ENCODE measurements at regions of chr15 and their contacts with region 1.

Region 1: DNA sequence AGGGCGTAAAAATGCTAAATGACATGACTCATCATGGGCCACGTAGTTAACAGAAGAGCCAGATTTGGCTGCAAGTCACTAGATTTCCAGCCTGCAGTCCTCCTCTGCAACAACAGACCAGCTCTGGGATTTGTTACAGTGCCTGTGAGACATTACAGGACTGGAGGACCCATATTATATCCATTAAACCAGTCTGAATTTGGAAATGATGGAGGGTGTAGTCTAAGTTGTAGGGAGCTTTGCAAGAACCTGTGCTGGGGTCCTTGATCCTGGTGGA is 10.8 kb downstream of the ZNF774 start:
- DNase-seq: no peak
- H3K4me3 Mint-ChIP-seq: no peak overlapping the region
- H3K27ac Mint-ChIP-seq: peak overlapping the region; percentile 54
- H3K4me1 Mint-ChIP-seq: peaks cover 38% of the 10 kb centered on the region
- H3K27me3 Mint-ChIP-seq: no peaks in the 10 kb centered on the region

Region 2: DNA sequence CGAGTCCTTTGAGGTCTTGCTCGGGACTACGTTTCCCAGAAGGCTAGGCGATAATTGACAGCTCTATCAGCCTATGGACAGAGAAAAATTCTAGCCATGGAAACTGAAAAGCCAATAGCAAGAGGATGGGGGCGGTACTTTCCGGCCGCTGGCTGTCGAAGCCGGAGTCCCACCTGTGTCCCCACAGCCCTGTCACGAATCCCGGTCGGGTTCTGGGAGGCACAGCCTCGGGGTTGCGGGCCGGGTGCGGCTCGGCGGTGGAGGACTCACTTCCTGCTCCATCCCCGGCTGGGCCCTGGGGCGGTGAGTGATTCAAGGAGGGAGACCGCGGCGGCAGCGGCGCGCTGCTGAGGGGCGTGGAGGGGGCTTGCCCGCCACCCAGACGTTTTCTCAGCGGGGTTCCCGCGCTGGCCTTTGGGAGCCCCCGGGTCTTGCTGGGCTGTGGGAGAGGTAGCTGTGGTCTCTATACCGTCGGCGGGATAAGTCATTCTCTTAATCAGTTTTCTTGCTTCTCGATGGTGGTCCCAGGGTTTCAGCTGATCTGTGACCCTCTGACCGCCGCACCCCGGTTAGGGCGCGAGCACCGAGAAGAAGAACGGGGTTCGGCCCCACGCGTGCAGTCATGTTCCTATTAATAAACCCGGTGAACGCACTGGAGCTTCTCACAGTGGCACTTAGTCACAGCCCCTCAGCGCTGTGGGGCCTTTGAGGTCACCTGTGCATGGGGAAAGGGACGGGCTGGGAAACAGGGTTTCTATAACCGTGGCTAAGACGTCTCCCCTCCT is 10.6 kb before region 1 on chr15 and contains the start of gene ZNF774:
- intact Hi-C with region 1: loop called (anchors 1 kb)
- DNase-seq: peak; percentile 87
- H3K4me3 Mint-ChIP-seq: peak within 1 kb of the TSS; percentile 86
- H3K27ac Mint-ChIP-seq: peak within 1 kb of the TSS; percentile 85
- H3K4me1 Mint-ChIP-seq: peaks cover 11% of the 10 kb centered on the region
- H3K27me3 Mint-ChIP-seq: peaks cover 7% of the 10 kb centered on the region
- total RNA-seq, gene ZNF774: 2.7 and 3.6 TPM in 2 replicates

Region 3: GRCh38 chr15:90376789-90377188 is 13.9 kb after region 1 on chr15:
- intact Hi-C with region 1: loop called (anchors 2 kb)
- DNase-seq: peak; percentile 69
- H3K4me3 Mint-ChIP-seq: peak overlapping the region; percentile 23
- H3K27ac Mint-ChIP-seq: peak overlapping the region; percentile 96
- H3K4me1 Mint-ChIP-seq: peaks cover 31% of the 10 kb centered on the region
- H3K27me3 Mint-ChIP-seq: no peaks in the 10 kb centered on the region

Region 4: DNA sequence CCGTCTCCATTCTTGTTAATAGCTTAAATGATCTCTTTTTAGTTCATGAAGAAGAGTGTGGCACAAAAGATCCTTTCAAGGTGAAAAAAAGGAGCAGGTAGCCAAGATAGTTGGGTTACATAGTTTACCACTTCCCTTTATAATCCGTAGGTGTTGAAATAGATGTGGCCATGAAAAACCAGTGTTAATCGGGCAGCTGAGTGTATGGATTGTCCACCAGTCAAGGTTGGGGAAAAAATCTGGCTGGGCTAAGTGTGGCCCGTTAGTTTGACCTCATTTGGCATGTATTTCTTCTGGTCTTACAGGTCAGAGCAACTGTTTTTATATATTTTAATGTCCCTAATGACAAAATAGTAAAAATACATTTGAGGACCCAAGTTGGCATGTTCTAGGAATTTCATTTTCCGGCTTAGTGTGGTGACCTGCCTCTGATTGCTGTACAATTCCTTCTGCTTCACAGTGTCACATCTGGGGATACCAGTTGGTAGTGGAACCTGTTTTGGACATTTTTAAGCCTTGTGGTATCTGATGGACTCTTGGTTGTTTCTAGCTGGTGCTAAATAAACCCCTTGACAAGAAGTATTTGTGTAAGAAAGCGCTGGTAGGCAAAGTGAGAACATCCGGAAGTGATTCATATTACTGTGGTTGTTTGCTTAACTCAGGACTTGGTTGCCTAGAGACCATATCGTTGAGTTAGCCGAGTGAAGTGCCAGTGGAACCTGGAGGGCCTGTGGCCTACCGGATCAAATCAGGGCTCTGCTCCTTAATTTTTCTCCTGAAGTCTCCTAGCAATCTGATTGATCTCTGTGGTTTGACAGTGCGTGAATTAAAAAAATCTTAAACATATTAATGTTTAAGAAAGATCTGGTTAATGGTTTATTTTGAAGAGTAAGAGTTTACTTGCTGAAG is 37.8 kb after region 1 on chr15:
- intact Hi-C with region 1: loop called (anchors 5 kb)
- DNase-seq: peak; percentile 70
- H3K4me3 Mint-ChIP-seq: peak overlapping the region; percentile 68
- H3K27ac Mint-ChIP-seq: peak overlapping the region; percentile 93
- H3K4me1 Mint-ChIP-seq: peaks cover 54% of the 10 kb centered on the region
- H3K27me3 Mint-ChIP-seq: no peaks in the 10 kb centered on the region

Region 5: GRCh38 chr15:90482124-90483011 is 119.5 kb after region 1 on chr15:
- intact Hi-C with region 1: loop called (anchors 1 kb)
- DNase-seq: no peak
- H3K4me3 Mint-ChIP-seq: no peak overlapping the region
- H3K27ac Mint-ChIP-seq: no peak overlapping the region
- H3K4me1 Mint-ChIP-seq: peaks cover 35% of the 10 kb centered on the region
- H3K27me3 Mint-ChIP-seq: no peaks in the 10 kb centered on the region

Region 6: GRCh38 chr15:91032919-91033803 is 670.3 kb after region 1 on chr15:
- intact Hi-C with region 1: no loop called
- DNase-seq: peak; percentile 53
- H3K4me3 Mint-ChIP-seq: no peak overlapping the region
- H3K27ac Mint-ChIP-seq: no peak overlapping the region
- H3K4me1 Mint-ChIP-seq: no peaks in the 10 kb centered on the region
- H3K27me3 Mint-ChIP-seq: peaks cover 10% of the 10 kb centered on the region